Dendritic cell treated with granulocyte-macrophage colony-stimulating factor and Interleukin-4, amounts not matched to agents 40 ng/mL and 50 ng/mL, for 4 days (primary cell): ENCODE measurements at regions of chr1 and their contacts with region 1.

Region 1: GRCh38 chr1:66331657-66332547 is 202.1 kb upstream of the SGIP1 start:
- H3K4me3 Mint-ChIP-seq: peak overlapping the region; percentile 85
- H3K27ac Mint-ChIP-seq: peak overlapping the region; percentile 83
- H3K4me1 Mint-ChIP-seq: peaks cover 57% of the 10 kb centered on the region
- H3K27me3 Mint-ChIP-seq: no peaks in the 10 kb centered on the region

Region 2: DNA sequence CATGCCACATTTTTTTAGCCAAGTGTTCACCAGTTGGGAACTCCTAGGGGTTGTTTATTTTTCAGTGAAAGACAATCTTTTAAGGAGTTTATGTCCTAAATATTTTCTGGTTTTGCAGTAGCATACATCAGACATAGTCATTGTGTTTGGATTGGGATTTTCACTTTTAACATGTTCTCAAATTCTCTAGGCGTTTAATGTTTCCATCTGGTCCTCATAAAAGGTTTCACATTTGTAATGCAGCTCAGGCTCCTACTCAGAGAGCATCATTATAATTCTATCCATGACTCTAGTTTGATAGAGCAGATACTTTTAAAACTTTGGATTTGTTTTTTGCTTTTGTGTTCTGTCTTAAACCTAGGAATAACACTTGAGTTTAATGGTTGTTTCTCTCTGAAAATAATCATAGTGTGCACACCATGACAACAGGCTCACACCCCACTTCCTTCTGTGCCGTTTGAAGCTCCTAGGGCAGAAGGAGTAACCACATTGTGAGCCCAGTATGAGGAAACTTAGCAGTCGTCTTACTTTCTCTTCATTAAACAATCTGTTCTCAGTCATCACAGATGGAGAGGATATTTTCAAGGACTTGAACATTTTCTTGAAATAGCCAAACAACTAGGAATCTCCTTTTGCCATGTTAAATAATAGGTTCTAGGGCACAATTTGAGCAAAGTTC is 319.7 kb before region 1 on chr1:
- intact Hi-C with region 1: no loop called
- H3K4me3 Mint-ChIP-seq: no peak overlapping the region
- H3K27ac Mint-ChIP-seq: no peak overlapping the region
- H3K4me1 Mint-ChIP-seq: peaks cover 21% of the 10 kb centered on the region
- H3K27me3 Mint-ChIP-seq: no peaks in the 10 kb centered on the region

Region 3: DNA sequence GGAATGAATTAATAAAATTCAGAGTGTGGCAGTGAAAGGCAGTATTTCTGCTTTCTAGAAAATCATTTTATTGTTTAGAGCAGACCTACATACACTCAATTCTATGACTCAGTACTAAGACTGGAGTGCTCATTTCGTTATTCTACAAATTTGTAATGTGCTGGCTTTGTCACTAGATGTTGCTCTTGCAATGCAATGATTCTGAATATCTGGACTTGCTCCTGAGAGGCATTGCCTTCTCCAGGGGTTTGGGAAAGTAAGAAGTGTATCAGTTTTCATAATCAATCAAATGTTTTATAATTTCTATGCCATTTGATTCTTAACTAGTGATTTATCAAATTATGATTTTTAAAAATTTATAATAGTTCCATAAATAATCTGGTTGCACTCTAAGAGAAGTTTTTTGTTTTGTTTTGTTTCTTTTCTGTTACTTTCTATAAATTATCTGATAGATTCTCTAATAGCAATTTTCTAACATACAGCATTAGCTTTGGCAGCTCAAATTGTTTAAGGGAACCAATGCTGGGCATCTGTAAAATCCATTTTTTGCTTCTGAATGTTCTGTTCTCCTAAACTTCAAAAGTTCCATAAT is 78.5 kb before region 1 on chr1:
- intact Hi-C with region 1: loop called (anchors 2 kb)
- H3K4me3 Mint-ChIP-seq: no peak overlapping the region
- H3K27ac Mint-ChIP-seq: no peak overlapping the region
- H3K4me1 Mint-ChIP-seq: peaks cover 34% of the 10 kb centered on the region
- H3K27me3 Mint-ChIP-seq: no peaks in the 10 kb centered on the region

Region 4: DNA sequence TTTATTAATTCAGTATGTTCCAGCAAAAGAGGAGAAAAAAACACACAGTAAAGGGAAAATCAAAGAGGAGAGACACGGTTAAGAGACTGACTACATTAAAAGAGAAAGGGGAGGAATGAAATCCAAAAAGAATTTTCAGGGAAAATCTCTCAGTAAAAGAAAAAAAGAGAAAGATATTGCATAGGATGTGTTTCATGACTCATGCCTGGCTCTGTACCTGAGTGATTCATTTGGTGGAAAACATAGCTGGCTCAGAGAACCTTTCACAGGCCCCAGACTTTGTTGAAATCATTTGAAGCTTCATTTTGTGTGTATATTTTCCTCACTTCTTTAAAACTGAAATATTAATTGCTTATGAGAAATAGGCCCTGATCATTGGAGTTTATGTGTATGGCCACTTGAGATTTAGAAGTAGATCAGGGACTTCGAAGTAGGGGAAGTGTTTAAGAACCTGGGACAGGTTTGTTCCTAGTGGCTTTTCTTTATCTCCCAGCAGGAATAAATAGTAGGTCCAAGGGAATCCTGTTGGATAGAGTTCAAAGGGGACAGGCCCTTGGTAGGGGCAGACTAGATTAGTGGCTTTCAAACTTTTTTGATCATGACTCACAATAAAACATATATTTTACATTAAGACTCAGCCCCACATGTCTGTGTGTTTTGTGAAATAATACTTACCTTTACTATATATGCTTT is 37.1 kb before region 1 on chr1:
- intact Hi-C with region 1: loop called (anchors 5 kb)
- H3K4me3 Mint-ChIP-seq: no peak overlapping the region
- H3K27ac Mint-ChIP-seq: no peak overlapping the region
- H3K4me1 Mint-ChIP-seq: peaks cover 26% of the 10 kb centered on the region
- H3K27me3 Mint-ChIP-seq: peaks cover 2% of the 10 kb centered on the region

Region 5: GRCh38 chr1:66360285-66360724 is 28.4 kb after region 1 on chr1:
- intact Hi-C with region 1: no loop called
- H3K4me3 Mint-ChIP-seq: no peak overlapping the region
- H3K27ac Mint-ChIP-seq: no peak overlapping the region
- H3K4me1 Mint-ChIP-seq: peaks cover 18% of the 10 kb centered on the region
- H3K27me3 Mint-ChIP-seq: no peaks in the 10 kb centered on the region

Region 6: GRCh38 chr1:66380452-66381212 is 48.7 kb after region 1 on chr1:
- intact Hi-C with region 1: loop called (anchors 5 kb)
- H3K4me3 Mint-ChIP-seq: no peak overlapping the region
- H3K27ac Mint-ChIP-seq: peak overlapping the region; percentile 22
- H3K4me1 Mint-ChIP-seq: peaks cover 74% of the 10 kb centered on the region
- H3K27me3 Mint-ChIP-seq: peaks cover 21% of the 10 kb centered on the region

Region 7: GRCh38 chr1:66426239-66426853 is 94.4 kb after region 1 on chr1:
- intact Hi-C with region 1: no loop called
- H3K4me3 Mint-ChIP-seq: no peak overlapping the region
- H3K27ac Mint-ChIP-seq: no peak overlapping the region
- H3K4me1 Mint-ChIP-seq: peaks cover 20% of the 10 kb centered on the region
- H3K27me3 Mint-ChIP-seq: peaks cover 11% of the 10 kb centered on the region

Region 8: DNA sequence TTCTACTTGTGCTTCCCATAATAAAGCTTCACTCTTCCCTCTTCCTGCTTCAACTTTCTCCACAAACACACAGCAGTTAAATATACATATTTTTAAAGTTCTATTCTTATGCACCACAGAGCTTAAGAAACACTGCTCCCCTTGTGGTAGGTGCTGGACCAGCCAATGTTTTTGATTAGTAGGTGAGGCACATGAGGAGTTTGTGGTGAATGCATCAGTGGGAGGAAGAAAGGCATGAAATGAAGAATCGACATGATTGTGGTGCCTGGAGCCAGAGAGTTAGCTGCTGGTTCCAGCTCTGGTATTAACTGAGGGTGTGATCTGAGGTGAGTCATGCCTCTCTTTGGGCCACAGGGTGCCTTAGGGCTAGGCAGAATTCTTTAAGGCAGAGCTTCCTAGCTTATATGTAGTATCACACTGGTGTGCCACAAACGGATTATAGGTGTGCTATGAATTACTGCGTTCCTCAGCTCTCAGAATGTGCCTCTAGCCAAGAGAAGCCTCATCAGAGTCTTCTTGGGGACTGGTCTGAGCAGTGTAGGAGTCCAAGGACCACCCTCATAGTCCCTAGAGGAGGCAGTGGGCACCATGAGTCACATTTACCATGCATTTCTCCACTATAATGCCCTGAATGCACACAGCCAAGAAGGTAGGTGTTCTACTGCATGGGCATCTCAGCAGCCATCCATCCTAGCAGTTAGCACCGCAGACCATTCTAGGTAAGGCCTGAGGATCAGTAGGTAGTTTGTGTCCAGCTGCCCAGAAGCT is 104.7 kb after region 1 on chr1:
- intact Hi-C with region 1: loop called (anchors 5 kb)
- H3K4me3 Mint-ChIP-seq: no peak overlapping the region
- H3K27ac Mint-ChIP-seq: no peak overlapping the region
- H3K4me1 Mint-ChIP-seq: peaks cover 13% of the 10 kb centered on the region
- H3K27me3 Mint-ChIP-seq: no peaks in the 10 kb centered on the region